ENCODE measurements at regions of chr19 and their contacts with region 1.

Region 1: GRCh38 chr19:18379803-18380747 is 5.9 kb upstream of the GDF15 start:
- DNase-seq: peak; percentile 94
- ATAC-seq: peak; percentile 92
- H3K4me3 ChIP-seq: no peak overlapping the region
- H3K27ac ChIP-seq: peak overlapping the region; percentile 85
- H3K4me1 ChIP-seq: peaks cover 36% of the 10 kb centered on the region
- H3K27me3 ChIP-seq: no peaks in the 10 kb centered on the region
- CTCF ChIP-seq: no peak

Region 2: GRCh38 chr19:18179957-18180356 is 200.1 kb before region 1 on chr19:
- CTCF ChIA-PET with region 1: no interaction called
- POLR2A ChIA-PET with region 1: no interaction called
- intact Hi-C with region 1: no loop called
- DNase-seq: no peak
- ATAC-seq: no peak
- H3K4me3 ChIP-seq: no peak overlapping the region
- H3K27ac ChIP-seq: no peak overlapping the region
- H3K4me1 ChIP-seq: peaks cover 5% of the 10 kb centered on the region; the same call in 1 of the 2 replicates
- H3K27me3 ChIP-seq: no peaks in the 10 kb centered on the region
- CTCF ChIP-seq: no peak

Region 3: GRCh38 chr19:18192673-18193387 is 187.2 kb before region 1 on chr19 and contains the start of gene MPV17L2:
- CTCF ChIA-PET with region 1: no interaction called
- POLR2A ChIA-PET with region 1: no interaction called
- intact Hi-C with region 1: no loop called
- DNase-seq: peak; percentile 99
- ATAC-seq: peak; percentile 90
- H3K4me3 ChIP-seq: peak within 1 kb of the TSS; percentile 85
- H3K27ac ChIP-seq: peak within 1 kb of the TSS; percentile 26
- H3K4me1 ChIP-seq: peaks cover 13% of the 10 kb centered on the region
- H3K27me3 ChIP-seq: no peaks in the 10 kb centered on the region
- CTCF ChIP-seq: no peak
- total RNA-seq, gene MPV17L2: 34.2 and 44.7 TPM in 2 replicates

Region 4: GRCh38 chr19:18328340-18329034 is 51.6 kb before region 1 on chr19:
- CTCF ChIA-PET with region 1: no interaction called
- POLR2A ChIA-PET with region 1: no interaction called
- intact Hi-C with region 1: no loop called
- DNase-seq: peak; percentile 97
- ATAC-seq: peak; percentile 97
- H3K4me3 ChIP-seq: peak overlapping the region; percentile 50
- H3K27ac ChIP-seq: no peak overlapping the region
- H3K4me1 ChIP-seq: peaks cover 10% of the 10 kb centered on the region
- H3K27me3 ChIP-seq: no peaks in the 10 kb centered on the region
- CTCF ChIP-seq: peak; percentile 89

Region 5: GRCh38 chr19:18364826-18365528 is 15.1 kb before region 1 on chr19:
- CTCF ChIA-PET with region 1: no interaction called
- POLR2A ChIA-PET with region 1: interaction called, 3 read pairs
- intact Hi-C with region 1: loop called (anchors 2 kb)
- DNase-seq: peak; percentile 87
- ATAC-seq: peak; percentile 81
- H3K4me3 ChIP-seq: no peak overlapping the region
- H3K27ac ChIP-seq: peak overlapping the region; percentile 32
- H3K4me1 ChIP-seq: peaks cover 19% of the 10 kb centered on the region
- H3K27me3 ChIP-seq: no peaks in the 10 kb centered on the region
- CTCF ChIP-seq: no peak